ENCODE measurements at regions of chr11 and their contacts with region 1.

Region 1: DNA sequence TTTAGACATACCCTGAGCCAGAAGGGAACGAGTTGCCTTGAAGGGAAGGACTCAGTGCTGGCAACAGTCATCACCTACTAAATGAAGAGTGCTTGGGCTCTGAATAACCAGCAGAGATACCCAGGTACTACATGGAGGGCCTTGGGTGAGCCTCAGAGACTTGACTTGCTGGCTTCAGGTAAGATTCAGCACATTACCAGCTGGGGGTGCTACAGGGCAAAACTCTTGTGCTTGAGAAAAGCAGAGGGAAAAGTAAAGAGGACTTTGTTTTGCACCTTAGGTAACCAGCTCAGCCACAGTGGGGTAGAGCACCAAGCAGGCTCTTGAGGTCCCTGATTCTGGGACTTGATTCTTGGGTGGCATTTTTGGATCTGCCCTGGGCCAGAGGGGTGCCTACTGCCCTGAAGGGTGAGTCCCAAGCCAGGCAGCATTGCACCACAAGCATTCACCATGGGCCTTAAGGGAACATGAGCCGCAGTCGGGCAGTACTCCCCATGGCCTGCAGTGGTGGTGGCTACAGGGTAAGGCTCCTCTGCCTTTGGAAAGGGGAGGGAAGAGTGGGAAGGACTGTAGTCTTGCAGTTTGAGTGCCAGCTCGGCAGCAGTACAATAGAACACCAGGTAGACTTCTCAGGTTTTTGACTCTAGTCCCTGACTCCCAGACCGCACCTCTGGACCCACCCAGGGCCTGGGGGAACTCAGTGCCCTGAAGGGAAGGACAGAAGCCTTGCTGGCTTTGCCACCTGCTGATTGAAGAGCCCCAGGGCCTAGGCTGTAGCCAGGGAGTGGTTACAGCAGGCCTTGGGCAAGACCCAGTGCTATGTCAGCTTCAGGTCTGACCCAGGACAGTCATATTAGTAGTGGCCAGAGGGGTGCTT is 22.7 kb upstream of the PLEKHA7 start:
- DNase-seq: peak; percentile 67
- ATAC-seq: peak; percentile 96
- H3K4me3 Mint-ChIP-seq: no peak overlapping the region
- H3K27ac Mint-ChIP-seq: no peak overlapping the region
- H3K4me1 Mint-ChIP-seq: no peaks in the 10 kb centered on the region; the same call in 1 of the 2 replicates
- H3K27me3 Mint-ChIP-seq: peaks cover 9% of the 10 kb centered on the region
- CTCF ChIP-seq: peak; percentile 26; the same call in 1 of the 2 replicates

Region 2: DNA sequence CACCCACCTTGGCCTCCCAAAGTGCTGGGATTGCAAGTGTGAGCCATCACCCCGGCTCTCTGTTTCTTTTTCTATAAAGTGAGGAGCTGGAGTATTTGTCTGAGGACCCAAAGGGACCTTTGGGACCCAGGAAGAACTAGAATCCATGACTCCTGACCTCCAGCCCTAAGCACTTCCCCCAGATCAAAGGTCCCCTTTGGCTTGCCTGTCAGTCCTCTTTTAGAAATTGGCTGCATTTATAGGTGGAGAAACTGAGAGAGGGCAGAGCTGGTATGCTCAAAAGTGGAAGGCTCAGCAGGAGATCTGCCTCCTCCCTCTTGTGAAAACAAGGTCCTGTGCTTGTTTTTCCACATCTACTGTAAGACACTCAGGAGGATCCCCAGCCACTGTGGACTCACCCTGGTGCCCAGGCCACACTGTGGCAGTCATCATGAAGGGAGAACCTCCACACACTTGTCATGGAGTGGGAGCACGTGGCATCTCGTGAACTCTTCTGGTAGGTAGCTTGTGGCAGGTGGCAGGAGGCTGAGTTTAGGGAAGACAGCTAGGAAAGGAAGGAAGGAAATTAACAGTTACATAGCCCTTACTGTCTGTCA is 10.3 kb before region 1 on chr11:
- CTCF ChIA-PET with region 1: interaction called, 14 read pairs
- POLR2A ChIA-PET with region 1: no interaction called
- DNase-seq: no peak
- ATAC-seq: no peak
- H3K4me3 Mint-ChIP-seq: no peak overlapping the region
- H3K27ac Mint-ChIP-seq: no peak overlapping the region; the same call in 1 of the 2 replicates
- H3K4me1 Mint-ChIP-seq: peaks cover 3% of the 10 kb centered on the region; the same call in 1 of the 2 replicates
- H3K27me3 Mint-ChIP-seq: peaks cover 4% of the 10 kb centered on the region; the same call in 1 of the 2 replicates
- CTCF ChIP-seq: no peak

Measured in WTC11 (cell line).